AG04450 (cell line): ENCODE measurements at regions of chr9 and their contacts with region 1.

Region 1: DNA sequence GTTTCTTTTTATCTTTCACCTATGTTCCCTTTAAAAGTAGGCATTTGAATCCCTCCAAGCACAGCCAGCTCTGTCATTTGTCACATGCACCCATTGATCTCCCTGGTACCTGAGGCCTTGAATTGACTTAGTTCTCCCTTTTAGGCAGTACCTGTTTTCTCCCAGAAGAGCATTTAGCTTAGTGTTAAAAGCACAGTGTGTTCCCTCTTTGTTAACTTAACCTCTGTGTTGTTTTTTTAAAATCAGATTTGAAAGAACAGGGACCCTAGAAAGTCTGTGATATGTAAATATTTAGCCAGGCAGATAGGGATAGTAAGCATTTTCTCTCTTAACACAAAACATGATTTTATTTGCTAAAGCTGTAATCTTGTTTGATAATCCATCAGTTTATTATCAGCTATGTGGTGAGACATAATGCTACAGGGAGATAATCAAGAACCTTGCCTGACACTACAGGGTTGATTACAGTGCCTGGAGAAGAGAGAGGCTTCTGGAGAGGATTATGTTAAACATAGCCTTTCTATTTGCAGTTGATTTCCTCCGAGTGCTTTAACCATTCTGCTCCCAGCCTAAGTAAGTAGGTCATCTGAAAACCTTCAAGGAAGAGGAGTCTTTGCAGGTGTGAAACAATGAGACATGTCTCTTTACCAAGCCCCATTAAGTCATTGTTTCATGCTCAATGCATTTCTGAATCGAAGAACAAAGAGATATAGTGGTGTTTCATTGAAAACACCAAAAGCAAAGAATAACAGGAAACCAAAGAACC is 113.6 kb upstream of the SPATA31D4 start:
- DNase-seq: no peak
- H3K4me3 ChIP-seq: no peak overlapping the region
- H3K27ac ChIP-seq: no peak overlapping the region
- H3K27me3 ChIP-seq: no peaks in the 10 kb centered on the region
- CTCF ChIP-seq: no peak

Region 2: DNA sequence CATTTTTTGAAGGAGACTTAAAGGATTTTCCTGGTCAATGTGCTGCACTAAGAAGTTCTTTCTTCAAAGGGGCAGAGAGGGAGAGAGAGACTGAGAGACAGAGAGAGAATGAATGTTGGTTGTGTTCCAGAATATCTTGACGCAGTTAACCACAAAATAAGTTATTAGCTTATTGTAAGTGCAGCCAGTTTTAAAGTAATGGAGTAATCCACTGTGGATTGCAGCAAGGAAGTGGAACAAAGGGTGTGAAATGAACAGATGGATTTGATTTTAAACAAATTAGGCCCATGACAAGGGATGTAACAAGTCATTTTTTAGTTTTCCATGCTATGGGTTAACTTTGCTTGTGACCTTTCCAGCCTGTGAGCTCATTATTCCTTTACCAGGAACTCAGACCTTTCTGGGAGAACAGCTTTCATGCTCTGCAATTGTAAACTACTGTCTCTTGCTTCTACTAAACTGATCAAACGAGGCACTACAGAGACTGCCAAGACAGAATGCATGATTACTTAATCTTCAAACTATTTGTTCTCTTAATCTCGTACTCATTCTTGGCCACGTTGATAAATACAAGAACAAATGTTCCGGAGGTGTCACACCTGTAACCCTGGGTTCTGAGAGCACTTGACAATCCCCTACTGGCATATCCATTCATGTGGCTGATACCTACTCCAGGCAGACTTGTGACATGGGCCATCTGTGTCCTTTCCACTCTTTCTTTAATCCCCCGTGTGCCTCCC is 256.3 kb before region 1 on chr9:
- CTCF ChIA-PET with region 1: no interaction called
- POLR2A ChIA-PET with region 1: no interaction called
- DNase-seq: peak; percentile 74
- H3K4me3 ChIP-seq: no peak overlapping the region
- H3K27ac ChIP-seq: peak overlapping the region; percentile 91
- H3K27me3 ChIP-seq: no peaks in the 10 kb centered on the region
- CTCF ChIP-seq: no peak

Region 3: GRCh38 chr9:81716409-81716808 is 98.2 kb before region 1 on chr9:
- CTCF ChIA-PET with region 1: interaction called, 13 read pairs
- POLR2A ChIA-PET with region 1: no interaction called
- DNase-seq: peak; percentile 7
- H3K4me3 ChIP-seq: no peak overlapping the region
- H3K27ac ChIP-seq: no peak overlapping the region
- H3K27me3 ChIP-seq: no peaks in the 10 kb centered on the region
- CTCF ChIP-seq: no peak

Region 4: DNA sequence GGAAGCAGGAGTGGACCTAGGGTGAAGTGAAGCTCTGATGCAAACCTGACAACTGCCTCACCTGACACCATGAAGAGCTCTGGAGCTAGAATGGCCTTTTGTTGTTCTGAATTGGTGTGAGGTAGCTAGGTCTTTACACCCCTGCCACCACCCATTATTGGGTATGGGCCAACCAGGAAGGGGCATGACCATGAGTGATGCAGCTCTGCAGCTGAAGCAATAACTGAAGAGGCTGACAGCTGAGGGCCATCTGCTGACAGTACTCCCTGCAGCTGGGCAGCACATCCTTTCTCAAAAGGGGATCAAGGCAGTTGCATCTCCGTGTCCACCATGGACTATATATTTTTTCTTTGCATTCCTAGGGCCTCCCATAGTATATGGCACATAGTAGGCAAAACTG is 38.2 kb before region 1 on chr9:
- CTCF ChIA-PET with region 1: no interaction called
- POLR2A ChIA-PET with region 1: interaction called, 12 read pairs
- DNase-seq: no peak
- H3K4me3 ChIP-seq: no peak overlapping the region
- H3K27ac ChIP-seq: no peak overlapping the region
- H3K27me3 ChIP-seq: no peaks in the 10 kb centered on the region
- CTCF ChIP-seq: no peak

Region 5: GRCh38 chr9:81827616-81828296 is 13.2 kb after region 1 on chr9:
- CTCF ChIA-PET with region 1: no interaction called
- POLR2A ChIA-PET with region 1: no interaction called
- DNase-seq: no peak
- H3K4me3 ChIP-seq: no peak overlapping the region
- H3K27ac ChIP-seq: no peak overlapping the region
- H3K27me3 ChIP-seq: no peaks in the 10 kb centered on the region
- CTCF ChIP-seq: no peak